ENCODE measurements at regions of chr7 and their contacts with region 1.

Region 1: GRCh38 chr7:98434095-98434494 is 33.2 kb upstream of the BAIAP2L1 start:
- DNase-seq: no peak
- H3K4me3 ChIP-seq: no peak overlapping the region
- H3K4me1 ChIP-seq: no peaks in the 10 kb centered on the region
- H3K27me3 ChIP-seq: no peaks in the 10 kb centered on the region

Region 2: DNA sequence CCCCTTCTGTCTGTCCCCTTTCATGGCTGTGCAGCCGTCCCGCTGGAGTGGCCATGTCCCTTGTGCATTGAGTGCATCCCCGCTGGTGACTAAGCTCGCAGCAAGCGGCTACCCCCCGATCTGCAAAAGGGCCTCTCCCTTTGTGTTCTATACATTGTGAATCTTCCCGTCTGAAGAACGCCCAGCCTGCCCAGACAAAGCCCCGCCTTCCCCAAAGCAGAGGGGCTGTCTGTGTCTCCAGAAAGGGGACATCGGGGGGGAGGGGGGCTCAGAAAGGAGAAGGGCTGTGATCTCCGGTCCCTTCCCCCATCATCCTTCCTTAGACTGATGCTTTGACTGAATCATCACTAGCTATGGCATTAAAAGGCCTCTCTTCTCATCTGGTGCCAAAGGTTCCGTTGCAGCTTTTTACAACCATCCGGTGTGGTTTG is 194.9 kb after region 1 on chr7:
- in situ Hi-C with region 1: no loop called
- DNase-seq: no peak
- H3K4me3 ChIP-seq: no peak overlapping the region
- H3K4me1 ChIP-seq: no peaks in the 10 kb centered on the region
- H3K27me3 ChIP-seq: 0 out of 2 replicates have a peak, but pooled peaks cover 5% of the 10 kb centered on the region

Region 3: GRCh38 chr7:98745722-98746318 is 311.7 kb after region 1 on chr7:
- in situ Hi-C with region 1: loop called (anchors 10 kb)
- DNase-seq: peak; percentile 20 to 88
- H3K4me3 ChIP-seq: no peak overlapping the region
- H3K4me1 ChIP-seq: no peaks in the 10 kb centered on the region
- H3K27me3 ChIP-seq: no peaks in the 10 kb centered on the region